Calu3 (cell line): ENCODE measurements at regions of chr1 and their contacts with region 1.

Region 1: GRCh38 chr1:152996633-152997400 is 4.7 kb upstream of the SPRR3 start:
- DNase-seq: peak; percentile 35
- H3K4me3 Mint-ChIP-seq: no peak overlapping the region
- H3K27ac Mint-ChIP-seq: peak overlapping the region; percentile 52
- H3K4me1 Mint-ChIP-seq: peaks cover 53% of the 10 kb centered on the region
- H3K27me3 Mint-ChIP-seq: no peaks in the 10 kb centered on the region
- CTCF ChIP-seq: no peak

Region 2: DNA sequence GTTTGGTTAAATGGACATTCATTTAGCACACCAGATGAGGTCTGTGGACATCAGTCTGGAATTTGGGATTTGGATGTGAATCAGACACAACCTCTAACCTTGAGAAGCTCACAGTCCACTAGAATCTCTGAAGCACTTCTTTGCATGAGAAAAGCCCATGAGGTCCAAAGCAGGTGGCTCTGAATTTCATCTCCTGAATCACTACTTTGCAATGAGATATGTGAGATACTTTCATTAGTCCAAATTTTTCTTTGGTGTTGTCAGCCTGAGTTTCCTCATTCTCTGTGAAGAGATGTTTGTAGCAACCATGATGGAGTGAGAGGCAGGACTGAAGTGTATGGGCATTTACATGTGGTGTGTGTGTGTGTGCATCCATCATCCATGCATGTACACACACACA is 350.2 kb before region 1 on chr1:
- CTCF ChIA-PET with region 1: interaction called, 19 read pairs
- intact Hi-C with region 1: no loop called
- DNase-seq: no peak
- H3K4me3 Mint-ChIP-seq: no peak overlapping the region
- H3K27ac Mint-ChIP-seq: no peak overlapping the region
- H3K4me1 Mint-ChIP-seq: no peaks in the 10 kb centered on the region
- H3K27me3 Mint-ChIP-seq: peaks cover 80% of the 10 kb centered on the region
- CTCF ChIP-seq: no peak

Region 3: DNA sequence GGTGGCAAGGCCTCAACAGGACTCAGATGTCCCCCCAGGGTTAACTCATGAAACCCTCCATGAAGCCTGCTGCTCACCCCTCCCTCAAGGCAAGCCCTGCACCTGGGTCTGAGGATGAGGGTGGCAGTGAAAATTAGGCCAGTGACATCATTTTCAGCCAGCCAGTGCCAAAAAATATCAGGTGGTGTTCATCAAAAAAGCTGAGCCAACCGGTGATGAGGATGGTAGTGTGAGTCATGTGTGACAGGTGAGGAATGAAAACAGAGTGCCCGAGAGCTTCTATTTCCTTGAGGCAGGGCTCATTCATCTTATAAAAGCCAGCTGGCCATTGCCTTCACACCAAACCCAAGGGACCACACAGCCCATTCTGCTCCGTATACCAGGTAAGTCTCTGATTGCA is 13.1 kb before region 1 on chr1 and contains the start of gene SPRR1A:
- CTCF ChIA-PET with region 1: no interaction called
- intact Hi-C with region 1: no loop called
- DNase-seq: peak; percentile 40
- H3K4me3 Mint-ChIP-seq: no peak within 1 kb of the TSS
- H3K27ac Mint-ChIP-seq: no peak within 1 kb of the TSS
- H3K4me1 Mint-ChIP-seq: peaks cover 35% of the 10 kb centered on the region
- H3K27me3 Mint-ChIP-seq: no peaks in the 10 kb centered on the region
- CTCF ChIP-seq: no peak
- total RNA-seq, gene SPRR1A: not detected in 2 replicates